ENCODE measurements at regions of chr14 and their contacts with region 1.

Region 1: GRCh38 chr14:90184571-90185266 is 71.6 kb upstream of the PSMC1 start:
- DNase-seq: no peak
- H3K4me3 ChIP-seq: no peak overlapping the region
- H3K27ac ChIP-seq: no peak overlapping the region
- H3K4me1 ChIP-seq: no peaks in the 10 kb centered on the region
- H3K27me3 ChIP-seq: no peaks in the 10 kb centered on the region
- CTCF ChIP-seq: no peak

Region 2: GRCh38 chr14:91545946-91546716 is 1361.4 kb after region 1 on chr14:
- intact Hi-C with region 1: loop called (anchors 5 kb)
- DNase-seq: no peak
- H3K4me3 ChIP-seq: no peak overlapping the region
- H3K27ac ChIP-seq: no peak overlapping the region
- H3K4me1 ChIP-seq: no peaks in the 10 kb centered on the region
- H3K27me3 ChIP-seq: no peaks in the 10 kb centered on the region
- CTCF ChIP-seq: no peak

Measured in tibial artery (tissue), 4 donors.